ENCODE measurements at regions of chr11 and their contacts with region 1.

Region 1: GRCh38 chr11:87421422-87421821 is 383.7 kb downstream of the TMEM135 start:
- DNase-seq: peak; percentile 90
- H3K4me3 ChIP-seq: no peak overlapping the region
- H3K27ac ChIP-seq: no peak overlapping the region
- H3K4me1 ChIP-seq: no peaks in the 10 kb centered on the region
- H3K27me3 ChIP-seq: no peaks in the 10 kb centered on the region
- CTCF ChIP-seq: peak; percentile 80

Region 2: GRCh38 chr11:86869966-86870570 is 551.4 kb before region 1 on chr11:
- CTCF ChIA-PET with region 1: interaction called, 11 read pairs
- POLR2A ChIA-PET with region 1: no interaction called
- intact Hi-C with region 1: loop called (anchors 1 kb)
- DNase-seq: peak; percentile 87
- H3K4me3 ChIP-seq: no peak overlapping the region
- H3K27ac ChIP-seq: no peak overlapping the region
- H3K4me1 ChIP-seq: peaks cover 23% of the 10 kb centered on the region
- H3K27me3 ChIP-seq: no peaks in the 10 kb centered on the region
- CTCF ChIP-seq: peak; percentile 95

Region 3: DNA sequence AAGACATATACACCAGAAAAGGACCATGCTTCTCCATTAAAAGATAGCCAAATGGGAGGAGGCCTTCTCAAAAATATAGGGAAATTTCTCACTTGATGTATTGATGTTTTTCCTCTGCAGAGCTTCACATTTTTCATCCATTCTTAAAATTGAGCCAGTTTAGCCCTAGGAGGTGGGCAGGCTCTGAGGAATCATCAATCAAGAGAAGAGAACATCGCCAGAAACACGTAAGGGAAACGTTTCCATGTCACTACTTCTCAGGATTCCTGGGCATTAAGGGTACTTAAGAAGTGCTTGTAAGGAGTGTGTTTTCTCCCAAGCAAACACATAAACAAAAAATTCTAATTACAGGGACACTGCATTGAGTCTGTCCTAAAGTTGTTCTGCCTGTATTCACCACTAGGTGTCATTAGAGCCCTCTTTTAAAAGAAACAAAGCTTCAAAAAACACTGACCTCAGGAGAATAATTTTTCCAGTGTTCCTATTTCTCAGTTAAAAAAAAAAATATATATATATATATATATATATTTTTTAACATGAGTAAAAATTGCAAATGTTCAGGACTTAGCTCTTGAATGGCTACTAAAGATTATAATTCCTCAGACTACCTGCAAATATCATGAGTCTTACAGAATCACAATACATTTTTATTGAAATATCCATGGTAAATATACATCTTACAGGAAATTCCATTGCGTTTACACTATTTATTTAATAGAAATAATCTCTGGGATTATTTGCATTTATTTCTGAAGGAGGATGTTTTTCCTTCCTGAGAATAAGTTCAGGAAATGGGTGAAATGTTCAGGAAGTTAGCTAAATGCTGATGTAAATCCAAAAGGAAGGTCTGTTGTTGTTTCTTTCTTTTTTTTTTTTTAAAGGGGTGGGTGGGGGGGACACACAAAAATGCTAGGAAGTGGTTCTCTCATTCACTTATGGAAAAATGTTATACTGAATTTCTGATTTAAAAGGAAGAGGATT is 482.2 kb before region 1 on chr11:
- CTCF ChIA-PET with region 1: interaction called, 14 read pairs
- POLR2A ChIA-PET with region 1: no interaction called
- intact Hi-C with region 1: loop called (anchors 5 kb)
- DNase-seq: peak; percentile 90
- H3K4me3 ChIP-seq: peak overlapping the region; percentile 19
- H3K27ac ChIP-seq: peak overlapping the region; percentile 97
- H3K4me1 ChIP-seq: peaks cover 85% of the 10 kb centered on the region
- H3K27me3 ChIP-seq: no peaks in the 10 kb centered on the region
- CTCF ChIP-seq: peak; percentile 76

Region 4: GRCh38 chr11:87352759-87353707 is 68.4 kb before region 1 on chr11:
- CTCF ChIA-PET with region 1: interaction called, 6 read pairs
- POLR2A ChIA-PET with region 1: no interaction called
- intact Hi-C with region 1: loop called (anchors 2 kb)
- DNase-seq: peak; percentile 92
- H3K4me3 ChIP-seq: no peak overlapping the region
- H3K27ac ChIP-seq: no peak overlapping the region
- H3K4me1 ChIP-seq: no peaks in the 10 kb centered on the region
- H3K27me3 ChIP-seq: no peaks in the 10 kb centered on the region
- CTCF ChIP-seq: peak; percentile 100

Region 5: DNA sequence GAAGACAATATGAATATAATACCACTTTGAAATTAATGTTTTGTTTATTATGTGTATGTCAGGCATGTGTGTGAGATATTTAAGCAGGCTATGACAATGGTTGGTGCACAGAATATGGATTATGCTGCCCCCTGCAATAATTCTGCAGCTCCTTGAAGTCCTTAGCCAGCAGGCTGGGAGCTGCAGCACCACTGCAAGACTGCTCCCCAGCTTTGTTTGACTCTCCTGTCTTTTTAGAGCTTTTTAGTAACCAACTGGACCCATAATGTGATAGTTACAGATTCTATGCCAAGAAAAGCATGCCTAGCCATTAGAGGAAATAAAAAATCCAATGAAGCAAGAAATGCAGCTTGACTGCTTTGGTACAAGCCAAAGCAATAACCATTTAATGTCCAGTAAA is 151.5 kb after region 1 on chr11:
- CTCF ChIA-PET with region 1: no interaction called
- POLR2A ChIA-PET with region 1: no interaction called
- intact Hi-C with region 1: no loop called
- DNase-seq: no peak
- H3K4me3 ChIP-seq: no peak overlapping the region
- H3K27ac ChIP-seq: no peak overlapping the region
- H3K4me1 ChIP-seq: no peaks in the 10 kb centered on the region
- H3K27me3 ChIP-seq: peaks cover 4% of the 10 kb centered on the region
- CTCF ChIP-seq: 0 out of 2 replicates have a peak, but pooled peaks have one; percentile 11